ENCODE measurements at regions of chr1 and their contacts with region 1.

Region 1: GRCh38 chr1:59879574-59879973 is 47.0 kb downstream of the CYP2J2 start:
- DNase-seq: peak; percentile 7 to 73 (median 54)
- ATAC-seq: peak; percentile 44
- H3K4me3 ChIP-seq: no peak overlapping the region
- H3K4me3 Mint-ChIP-seq: no peak overlapping the region
- H3K27ac ChIP-seq: no peak overlapping the region
- H3K27ac Mint-ChIP-seq: no peak overlapping the region
- H3K4me1 ChIP-seq: no peaks in the 10 kb centered on the region
- H3K4me1 Mint-ChIP-seq: peaks cover 3% of the 10 kb centered on the region
- H3K27me3 ChIP-seq: no peaks in the 10 kb centered on the region
- H3K27me3 Mint-ChIP-seq: peaks cover 6% of the 10 kb centered on the region
- CTCF ChIP-seq: peak; percentile 33

Region 2: GRCh38 chr1:59892841-59893811 is 13.6 kb after region 1 on chr1:
- CTCF ChIA-PET with region 1: interaction called, 11 read pairs
- POLR2A ChIA-PET with region 1: no interaction called
- intact Hi-C with region 1: no loop called
- DNase-seq: peak in 1 of 9 experiments; percentile 40
- ATAC-seq: peak; percentile 36
- H3K4me3 ChIP-seq: no peak overlapping the region
- H3K4me3 Mint-ChIP-seq: peak overlapping the region; percentile 54
- H3K27ac ChIP-seq: peak overlapping the region; percentile 19 to 37
- H3K27ac Mint-ChIP-seq: peak overlapping the region; percentile 81
- H3K4me1 ChIP-seq: peaks cover 25% of the 10 kb centered on the region
- H3K4me1 Mint-ChIP-seq: peaks cover 25% of the 10 kb centered on the region
- H3K27me3 ChIP-seq: no peaks in the 10 kb centered on the region
- H3K27me3 Mint-ChIP-seq: no peaks in the 10 kb centered on the region
- CTCF ChIP-seq: no peak

Measured in CD8-positive, alpha-beta T cell (primary cell).